ENCODE measurements at regions of chrX and their contacts with region 1.

Region 1: DNA sequence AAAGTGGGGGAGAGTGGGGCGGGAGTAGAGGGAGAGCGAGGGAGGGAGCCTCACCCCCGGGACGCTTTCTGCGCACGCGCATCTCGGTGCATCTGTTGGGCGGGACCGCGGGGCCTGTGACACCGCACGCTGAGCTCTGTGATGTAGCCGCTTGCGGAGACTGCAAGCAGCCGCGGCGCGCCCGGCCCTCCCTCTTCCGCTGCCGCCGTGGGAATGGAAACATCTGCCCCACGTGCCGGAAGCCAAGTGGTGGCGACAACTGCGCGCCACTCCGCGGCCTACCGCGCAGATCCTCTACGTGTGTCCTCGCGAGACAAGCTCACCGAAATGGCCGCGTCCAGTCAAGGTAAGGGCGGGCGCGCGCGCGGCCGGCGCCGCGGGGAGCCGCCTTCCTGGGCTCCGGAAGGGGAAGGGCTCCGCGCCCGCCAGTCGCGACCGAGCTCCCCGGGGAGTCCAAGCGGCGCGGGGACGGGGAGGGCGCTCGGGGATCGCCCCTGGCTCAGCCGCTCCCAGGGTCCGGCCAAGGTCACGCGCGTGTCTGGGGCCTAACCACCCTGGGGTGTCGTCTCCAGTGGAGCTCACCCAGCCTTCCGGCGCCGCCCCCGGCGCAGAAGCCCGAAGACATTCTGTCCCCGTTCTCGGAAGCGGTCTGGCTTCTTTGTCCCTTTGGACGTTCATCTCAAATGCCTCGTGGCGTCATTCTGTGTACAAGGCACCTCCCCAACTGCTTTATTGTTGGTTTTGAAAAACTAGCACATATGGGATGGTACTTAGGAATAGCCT is at the start of gene FUNDC2:
- DNase-seq: peak; percentile 78 to 96 (median 93)
- ATAC-seq: peak; percentile 92
- H3K4me3 ChIP-seq: peak within 1 kb of the TSS; percentile 90
- H3K4me3 Mint-ChIP-seq: peak within 1 kb of the TSS; percentile 82 to 92 (median 90)
- H3K27ac ChIP-seq: peak within 1 kb of the TSS; percentile 94
- H3K27ac Mint-ChIP-seq: peak within 1 kb of the TSS; percentile 84 to 97 (median 93)
- H3K4me1 ChIP-seq: peaks cover 4 to 12% of the 10 kb centered on the region in 2 donors
- H3K4me1 Mint-ChIP-seq: peaks cover 5 to 31% (median 27%) of the 10 kb centered on the region in 7 donors
- H3K27me3 ChIP-seq: no peaks in the 10 kb centered on the region
- H3K27me3 Mint-ChIP-seq: peaks cover 0 to 19% (median 0%) of the 10 kb centered on the region in 5 donors
- total RNA-seq, gene FUNDC2: 42.0 to 58.7 (median 50.1) TPM

Region 2: GRCh38 chrX:154804957-154805695 is 221.8 kb before region 1 on chrX and contains the start of gene MPP1:
- CTCF ChIA-PET with region 1: no interaction called
- POLR2A ChIA-PET with region 1: no interaction called
- intact Hi-C with region 1: loop called in 1 of 2 experiments (anchors 1 kb)
- DNase-seq: peak; percentile 61 to 79 (median 74)
- ATAC-seq: peak; percentile 99
- H3K4me3 ChIP-seq: peak within 1 kb of the TSS; percentile 55
- H3K4me3 Mint-ChIP-seq: peak within 1 kb of the TSS; percentile 80 to 91 (median 84)
- H3K27ac ChIP-seq: peak within 1 kb of the TSS; percentile 74
- H3K27ac Mint-ChIP-seq: peak within 1 kb of the TSS; percentile 53 to 82 (median 73)
- H3K4me1 ChIP-seq: peaks cover 0 to 27% of the 10 kb centered on the region in 2 donors
- H3K4me1 Mint-ChIP-seq: peaks cover 8 to 46% (median 42%) of the 10 kb centered on the region in 7 donors
- H3K27me3 ChIP-seq: no peaks in the 10 kb centered on the region
- H3K27me3 Mint-ChIP-seq: no peaks in the 10 kb centered on the region
- total RNA-seq, gene MPP1: 23.2 to 76.7 (median 31.9) TPM

Region 3: GRCh38 chrX:154990496-154990895 is 36.4 kb before region 1 on chrX:
- CTCF ChIA-PET with region 1: no interaction called
- POLR2A ChIA-PET with region 1: no interaction called
- intact Hi-C with region 1: no loop called
- DNase-seq: no peak
- ATAC-seq: no peak
- H3K4me3 ChIP-seq: no peak overlapping the region
- H3K4me3 Mint-ChIP-seq: no peak overlapping the region
- H3K27ac ChIP-seq: no peak overlapping the region
- H3K27ac Mint-ChIP-seq: no peak overlapping the region
- H3K4me1 ChIP-seq: no peaks in the 10 kb centered on the region
- H3K4me1 Mint-ChIP-seq: no peaks in the 10 kb centered on the region
- H3K27me3 ChIP-seq: peaks cover 0 to 3% of the 10 kb centered on the region in 2 donors
- H3K27me3 Mint-ChIP-seq: peaks cover 0 to 5% (median 0%) of the 10 kb centered on the region in 5 donors

Region 4: DNA sequence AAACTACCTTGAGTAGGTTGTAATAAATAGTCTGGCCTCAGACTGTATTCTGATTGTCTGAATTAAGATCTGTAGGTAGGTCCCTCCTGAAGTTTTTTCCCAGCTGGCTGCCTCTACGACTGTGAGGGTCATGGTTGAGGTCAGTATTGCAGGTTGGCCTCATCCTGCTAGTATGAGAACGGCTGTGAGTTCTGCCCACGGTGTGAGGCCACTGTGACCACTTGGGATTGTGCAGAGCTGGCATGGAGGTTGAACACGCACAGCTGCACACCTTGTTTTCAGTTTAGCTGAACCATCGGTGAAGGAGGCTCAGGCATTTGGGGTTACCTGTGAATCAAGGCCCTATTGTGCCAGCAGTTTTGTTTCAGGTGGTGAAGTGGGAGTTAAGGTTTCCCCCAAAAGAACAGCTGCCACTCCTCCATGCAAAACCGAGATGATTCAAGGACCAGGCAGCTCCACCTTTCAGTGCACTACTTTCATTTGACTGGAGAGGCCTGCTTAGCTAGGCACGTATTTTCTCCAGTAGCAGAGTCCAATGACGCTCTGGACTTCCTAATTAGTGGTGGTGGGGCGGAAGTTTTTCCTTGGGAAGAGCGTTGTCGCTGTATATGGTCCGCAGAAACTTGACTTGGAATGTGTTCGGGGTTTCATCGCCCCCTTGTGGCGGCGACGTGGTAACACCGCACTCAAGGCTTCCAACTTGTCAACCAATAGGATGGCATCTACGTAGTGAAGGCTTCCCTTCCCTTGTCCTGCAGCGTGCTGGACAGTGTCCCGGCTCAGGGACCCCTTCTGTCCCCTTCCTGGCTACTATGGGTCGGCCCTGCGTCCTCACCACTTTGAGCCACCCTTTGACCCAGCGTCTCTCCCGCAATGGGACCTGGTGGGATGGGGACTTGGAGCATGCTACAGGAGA is 30.2 kb after region 1 on chrX:
- CTCF ChIA-PET with region 1: no interaction called
- POLR2A ChIA-PET with region 1: interaction called, 5 read pairs
- intact Hi-C with region 1: loop called (anchors 2 kb)
- DNase-seq: peak; percentile 20 to 55 (median 36)
- ATAC-seq: peak; percentile 93
- H3K4me3 ChIP-seq: peak overlapping the region; percentile 47
- H3K4me3 Mint-ChIP-seq: peak overlapping the region; percentile 52 to 81 (median 76)
- H3K27ac ChIP-seq: peak overlapping the region; percentile 30
- H3K27ac Mint-ChIP-seq: peak overlapping the region in 8 of 9 donors; percentile 23 to 81 (median 60)
- H3K4me1 ChIP-seq: peaks cover 0 to 5% of the 10 kb centered on the region in 2 donors
- H3K4me1 Mint-ChIP-seq: peaks cover 0 to 31% (median 21%) of the 10 kb centered on the region in 7 donors
- H3K27me3 ChIP-seq: no peaks in the 10 kb centered on the region
- H3K27me3 Mint-ChIP-seq: no peaks in the 10 kb centered on the region

Region 5: GRCh38 chrX:155216179-155216939 is 189.4 kb after region 1 on chrX and contains the start of gene VBP1:
- CTCF ChIA-PET with region 1: no interaction called
- POLR2A ChIA-PET with region 1: no interaction called
- intact Hi-C with region 1: loop called (anchors 1 to 2 kb)
- DNase-seq: peak; percentile 61 to 89 (median 84)
- ATAC-seq: peak; percentile 99
- H3K4me3 ChIP-seq: peak within 1 kb of the TSS; percentile 73
- H3K4me3 Mint-ChIP-seq: peak within 1 kb of the TSS; percentile 86 to 98 (median 96)
- H3K27ac ChIP-seq: peak within 1 kb of the TSS; percentile 79
- H3K27ac Mint-ChIP-seq: peak within 1 kb of the TSS; percentile 76 to 96 (median 91)
- H3K4me1 ChIP-seq: peaks cover 8 to 16% of the 10 kb centered on the region in 2 donors
- H3K4me1 Mint-ChIP-seq: peaks cover 10 to 36% (median 26%) of the 10 kb centered on the region in 7 donors
- H3K27me3 ChIP-seq: no peaks in the 10 kb centered on the region
- H3K27me3 Mint-ChIP-seq: no peaks in the 10 kb centered on the region
- total RNA-seq, gene VBP1: 17.3 to 57.4 (median 26.4) TPM

Region 6: DNA sequence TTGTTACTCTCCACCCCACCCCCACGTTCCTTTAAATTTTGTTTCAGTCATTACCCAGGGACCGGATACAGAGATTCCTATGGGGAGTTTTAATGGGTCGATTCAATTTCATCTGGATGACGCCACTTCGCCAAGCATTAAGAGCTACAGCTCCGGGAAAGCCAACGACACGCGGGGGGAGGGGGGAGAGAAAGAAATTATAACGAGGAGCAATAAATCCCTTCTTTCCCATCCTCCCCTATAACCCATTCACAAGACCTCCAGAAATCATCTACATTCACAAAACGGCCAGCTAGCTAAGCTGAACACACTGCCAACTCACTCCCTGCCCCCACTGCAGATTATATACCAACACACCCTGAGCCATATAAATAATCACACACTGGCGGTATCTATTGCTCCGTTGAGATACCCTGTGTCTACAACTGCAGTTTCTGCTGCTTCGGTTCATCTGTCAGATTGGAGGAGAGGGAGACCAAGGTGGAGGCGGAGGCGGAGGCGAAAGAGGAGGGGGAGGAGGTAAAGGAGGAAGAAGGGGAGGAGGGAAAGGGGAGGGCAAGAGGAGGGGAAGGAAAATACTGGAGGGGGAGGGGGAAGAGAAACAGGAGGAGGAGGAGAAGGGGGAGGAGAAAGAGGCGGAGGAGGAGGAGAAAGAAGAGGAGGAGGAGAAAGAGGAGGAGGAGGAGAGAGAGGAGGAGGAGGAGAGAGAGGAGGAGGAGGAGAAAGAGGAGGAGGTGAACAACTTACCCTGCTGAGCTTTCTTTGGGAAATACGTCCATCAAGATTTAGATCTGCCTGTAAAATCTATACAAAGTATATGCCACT is 740.3 kb after region 1 on chrX:
- CTCF ChIA-PET with region 1: no interaction called
- POLR2A ChIA-PET with region 1: no interaction called
- intact Hi-C with region 1: loop called in 1 of 2 experiments (anchors 2 kb)
- DNase-seq: peak in 8 of 9 donors; percentile 2 to 38 (median 22)
- ATAC-seq: peak; percentile 51
- H3K4me3 ChIP-seq: peak overlapping the region; percentile 16
- H3K4me3 Mint-ChIP-seq: peak overlapping the region; percentile 79 to 90 (median 86)
- H3K27ac ChIP-seq: peak overlapping the region; percentile 7
- H3K27ac Mint-ChIP-seq: peak overlapping the region in 7 of 9 donors; percentile 16 to 90 (median 45)
- H3K4me1 ChIP-seq: no peaks in the 10 kb centered on the region
- H3K4me1 Mint-ChIP-seq: peaks cover 0 to 12% (median 6%) of the 10 kb centered on the region in 7 donors
- H3K27me3 ChIP-seq: no peaks in the 10 kb centered on the region
- H3K27me3 Mint-ChIP-seq: no peaks in the 10 kb centered on the region